ENCODE measurements at regions of chr14 and their contacts with region 1.

Region 1: DNA sequence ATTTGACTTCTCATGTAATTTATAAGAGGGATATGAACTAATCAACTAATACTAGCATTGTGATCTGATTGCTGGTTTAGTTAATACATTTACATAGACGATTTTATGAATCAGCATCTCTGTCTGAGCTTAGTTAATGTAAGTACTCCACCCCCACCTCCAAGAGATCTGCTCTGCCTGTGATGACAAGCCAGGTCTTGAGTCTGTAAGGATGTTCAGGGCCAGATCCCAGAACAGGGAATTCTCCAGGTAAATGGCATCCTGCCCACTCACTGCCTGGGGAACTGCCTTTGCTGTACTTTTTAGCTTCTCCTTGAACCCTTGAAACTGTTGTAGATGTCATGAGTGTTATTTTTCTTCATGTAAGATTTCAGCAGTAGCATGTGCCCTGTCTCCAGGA is 289.8 kb downstream of the RGS6 start:
- DNase-seq: no peak
- H3K4me3 ChIP-seq: no peak overlapping the region
- H3K27ac ChIP-seq: no peak overlapping the region
- H3K4me1 ChIP-seq: no peaks in the 10 kb centered on the region
- H3K27me3 ChIP-seq: no peaks in the 10 kb centered on the region
- CTCF ChIP-seq: no peak

Region 2: DNA sequence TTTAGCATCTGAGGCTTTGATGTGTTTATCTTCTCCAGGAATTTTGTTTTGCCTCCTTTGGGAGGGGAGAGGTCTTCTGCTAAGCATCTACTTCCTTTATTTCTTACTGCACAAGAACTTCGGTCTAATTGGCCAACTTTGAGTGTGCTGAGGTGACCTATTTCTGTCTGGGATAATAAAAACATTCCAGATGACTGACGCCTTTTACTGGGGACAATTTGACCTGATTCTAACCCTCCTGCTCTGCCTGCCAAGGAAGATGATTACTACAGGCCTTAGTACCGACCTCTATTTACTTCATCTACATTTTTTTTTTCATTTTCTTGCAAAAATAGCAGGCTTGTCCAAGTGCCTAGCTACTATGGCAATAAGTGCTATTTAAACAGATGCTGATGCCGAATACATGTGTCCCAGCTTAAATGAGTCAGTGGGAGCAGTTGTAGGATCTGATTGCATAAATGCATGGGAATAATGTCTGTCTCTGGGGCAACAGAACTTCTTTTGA is 35.6 kb before region 1 on chr14:
- dilution Hi-C with region 1: loop called (anchors 5 kb)
- DNase-seq: no peak
- H3K4me3 ChIP-seq: no peak overlapping the region
- H3K27ac ChIP-seq: no peak overlapping the region
- H3K4me1 ChIP-seq: no peaks in the 10 kb centered on the region
- H3K27me3 ChIP-seq: no peaks in the 10 kb centered on the region
- CTCF ChIP-seq: no peak

Measured in keratinocyte (primary cell).